ENCODE measurements at regions of chr5 and their contacts with region 1.

Region 1: DNA sequence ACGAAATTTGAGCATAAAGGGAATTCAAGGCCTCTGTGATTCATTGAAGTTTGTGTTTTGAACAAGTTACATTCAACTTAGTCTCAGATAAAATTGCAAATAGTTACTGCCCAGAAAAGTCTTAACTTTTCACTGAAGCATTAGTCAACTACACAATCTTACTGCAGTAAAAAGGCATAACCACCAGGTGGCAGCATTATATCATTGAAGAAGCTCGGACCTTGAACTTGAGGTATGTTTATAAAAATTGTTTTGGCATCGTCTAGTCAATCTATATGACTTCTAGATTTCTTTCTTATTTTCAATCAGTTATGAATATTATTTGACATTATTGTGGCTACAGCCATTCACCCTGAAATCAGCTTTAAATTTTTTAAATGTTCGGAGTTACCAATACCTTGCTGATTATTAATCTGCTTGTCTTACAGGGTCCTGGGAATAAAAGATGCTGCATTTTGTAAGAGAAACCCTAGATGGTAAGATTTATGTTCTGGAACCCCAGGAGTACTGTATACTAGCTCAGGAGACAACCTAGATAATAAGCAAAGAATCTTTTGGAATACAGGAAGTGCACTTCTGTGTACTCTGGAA is 83.9 kb upstream of the GRAMD2B start:
- DNase-seq: peak; percentile 20
- H3K4me3 Mint-ChIP-seq: no peak overlapping the region
- H3K27ac Mint-ChIP-seq: no peak overlapping the region
- H3K4me1 Mint-ChIP-seq: no peaks in the 10 kb centered on the region
- H3K27me3 Mint-ChIP-seq: peaks cover 9% of the 10 kb centered on the region

Region 2: DNA sequence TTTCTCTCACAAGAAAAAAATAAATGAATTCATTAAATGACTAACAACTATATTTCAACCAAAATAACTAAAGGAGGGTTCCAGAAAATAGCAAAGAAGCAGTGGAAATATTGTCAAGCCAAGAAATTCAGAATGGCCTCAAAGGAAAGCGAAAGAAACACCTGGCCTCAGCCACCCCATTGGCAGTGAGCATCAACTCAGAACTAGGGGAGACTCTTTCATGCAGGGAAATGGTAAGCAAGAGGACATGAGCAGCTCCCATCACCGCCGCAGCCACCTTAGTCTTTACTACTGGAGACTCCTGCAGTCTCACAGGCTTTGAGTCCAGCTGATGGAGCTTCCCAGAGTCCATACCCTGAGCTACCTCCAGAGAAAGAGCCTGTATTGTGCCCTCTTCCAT is 260.0 kb before region 1 on chr5:
- intact Hi-C with region 1: no loop called
- DNase-seq: no peak
- H3K4me3 Mint-ChIP-seq: no peak overlapping the region
- H3K27ac Mint-ChIP-seq: no peak overlapping the region
- H3K4me1 Mint-ChIP-seq: no peaks in the 10 kb centered on the region
- H3K27me3 Mint-ChIP-seq: no peaks in the 10 kb centered on the region

Region 3: DNA sequence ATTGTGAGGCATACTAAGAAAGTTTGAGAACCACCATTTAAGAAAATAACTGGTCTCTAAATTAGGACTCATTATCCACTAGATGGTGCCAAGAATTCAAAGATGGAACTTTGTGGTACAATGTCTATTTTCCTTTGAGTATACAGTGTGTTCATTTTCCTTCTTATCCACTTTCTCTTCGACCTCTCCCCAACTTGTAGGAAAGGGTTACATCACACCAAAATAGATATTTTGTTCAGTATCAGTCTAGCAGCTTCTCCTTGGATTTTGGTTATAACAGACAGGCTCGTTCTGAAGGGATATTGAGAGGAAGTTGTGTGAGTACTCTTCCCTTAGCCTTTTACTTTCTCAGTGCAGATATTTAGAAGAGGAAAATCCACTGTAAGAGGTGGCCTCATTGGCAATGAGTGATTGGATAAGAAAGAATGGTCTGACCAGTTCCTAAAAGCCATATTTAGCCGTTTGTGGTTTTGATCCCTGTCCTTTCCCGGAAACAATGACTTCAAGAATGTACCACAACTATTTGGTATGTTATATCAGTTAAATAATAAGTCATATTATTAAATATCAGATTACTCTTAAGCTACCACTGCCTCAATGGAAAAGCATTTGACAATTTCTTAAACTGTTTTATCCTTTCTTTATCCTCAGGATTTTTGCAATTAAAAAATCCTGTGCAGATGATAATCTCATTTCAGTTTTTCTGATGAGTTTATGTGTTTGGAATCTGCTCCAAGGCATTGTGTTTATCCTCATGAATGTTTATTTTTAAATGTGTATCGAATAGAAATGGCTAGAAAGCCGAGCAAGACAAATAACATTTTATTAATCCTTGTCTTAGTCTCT is 14.9 kb after region 1 on chr5:
- intact Hi-C with region 1: loop called (anchors 1 kb)
- DNase-seq: no peak
- H3K4me3 Mint-ChIP-seq: no peak overlapping the region
- H3K27ac Mint-ChIP-seq: no peak overlapping the region
- H3K4me1 Mint-ChIP-seq: peaks cover 6% of the 10 kb centered on the region
- H3K27me3 Mint-ChIP-seq: peaks cover 18% of the 10 kb centered on the region

Region 4: DNA sequence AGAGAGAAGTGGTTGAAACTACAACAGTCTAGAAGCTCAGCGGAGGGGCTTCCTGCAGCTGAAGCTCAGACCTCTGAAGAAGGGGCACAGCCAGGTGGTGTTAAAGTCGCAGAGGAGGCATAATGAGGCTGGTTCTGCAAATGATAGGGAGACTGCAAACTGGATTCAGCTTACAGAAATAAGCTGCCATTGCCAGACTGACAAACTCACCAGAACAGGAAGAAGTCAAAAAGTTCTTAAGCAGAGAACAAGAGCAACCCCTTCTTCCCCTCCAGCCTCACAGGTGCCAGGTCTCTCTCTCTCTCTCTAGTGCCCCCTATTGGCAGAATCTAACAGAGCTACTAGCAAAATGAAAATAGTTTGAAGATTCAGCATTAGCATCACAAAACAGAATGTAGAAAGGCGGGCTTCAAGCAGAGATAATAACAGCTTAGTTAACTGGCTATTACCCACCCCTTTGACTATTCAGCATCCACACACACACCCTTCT is 160.6 kb after region 1 on chr5:
- intact Hi-C with region 1: loop called (anchors 1 kb)
- DNase-seq: peak; percentile 11
- H3K4me3 Mint-ChIP-seq: no peak overlapping the region
- H3K27ac Mint-ChIP-seq: no peak overlapping the region
- H3K4me1 Mint-ChIP-seq: peaks cover 4% of the 10 kb centered on the region
- H3K27me3 Mint-ChIP-seq: no peaks in the 10 kb centered on the region

Region 5: GRCh38 chr5:127492854-127493738 is 1153.8 kb after region 1 on chr5:
- intact Hi-C with region 1: loop called (anchors 1 kb)
- DNase-seq: no peak
- H3K4me3 Mint-ChIP-seq: no peak overlapping the region
- H3K27ac Mint-ChIP-seq: no peak overlapping the region
- H3K4me1 Mint-ChIP-seq: no peaks in the 10 kb centered on the region
- H3K27me3 Mint-ChIP-seq: peaks cover 34% of the 10 kb centered on the region

Measured in activated T-helper 1 cell treated with anti-CD3 and anti-CD28 coated beads, Interleukin-12 subunit alpha, Interleukin-12 subunit beta, Interleukin-2, Interleukin-4 antibody, amounts not matched to agents 30 ng/mL and 10 ng/mL and 1 ng/mL, durations not matched to agents 14 hours and 24 hours and 36 hours (primary cell).